ENCODE measurements at regions of chr9 and their contacts with region 1.

Region 1: DNA sequence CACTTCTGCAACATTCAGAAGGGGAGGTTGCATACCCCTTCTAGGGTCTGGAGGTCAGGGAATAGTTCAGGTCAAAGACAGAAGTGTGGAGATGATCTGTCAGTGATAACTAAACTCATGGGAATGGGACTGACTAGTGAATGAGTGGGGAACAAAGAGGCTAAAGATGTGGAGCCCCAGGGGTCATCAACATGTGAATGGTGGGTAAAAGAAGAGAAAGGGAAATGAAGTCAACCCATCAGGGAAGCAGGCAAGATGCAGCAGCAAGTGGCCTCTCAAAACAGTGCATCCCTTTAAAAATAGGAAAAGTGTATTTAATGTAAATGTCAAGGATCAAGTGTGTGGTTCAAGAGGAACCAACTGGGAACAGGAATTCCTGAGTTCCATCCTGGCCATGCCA is 69.9 kb downstream of the PLPPR1 start:
- DNase-seq: no peak
- H3K4me3 ChIP-seq: no peak overlapping the region
- H3K27ac ChIP-seq: no peak overlapping the region
- H3K4me1 ChIP-seq: no peaks in the 10 kb centered on the region
- H3K27me3 ChIP-seq: no peaks in the 10 kb centered on the region
- CTCF ChIP-seq: no peak

Region 2: DNA sequence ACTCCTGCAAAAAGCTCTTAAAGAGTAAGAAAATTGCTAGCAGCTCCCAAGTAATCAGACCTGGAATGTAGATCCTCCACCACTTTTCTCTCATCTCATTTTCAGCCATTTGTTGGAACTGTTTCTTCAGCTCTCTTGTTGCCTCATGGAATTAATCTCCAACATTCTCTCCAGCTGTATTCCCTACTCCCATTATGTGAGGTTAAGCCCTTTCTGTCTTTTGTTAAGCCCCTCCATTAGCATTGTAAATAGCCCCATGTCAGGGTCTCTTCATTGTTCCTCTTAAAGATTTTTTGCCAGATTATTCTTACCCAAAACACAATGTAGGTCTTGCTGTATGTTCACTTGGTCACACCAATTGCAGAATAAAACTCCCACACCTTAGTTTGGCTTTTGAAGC is 50.0 kb after region 1 on chr9:
- intact Hi-C with region 1: loop called (anchors 5 kb)
- DNase-seq: no peak
- H3K4me3 ChIP-seq: no peak overlapping the region
- H3K27ac ChIP-seq: no peak overlapping the region
- H3K4me1 ChIP-seq: no peaks in the 10 kb centered on the region
- H3K27me3 ChIP-seq: no peaks in the 10 kb centered on the region
- CTCF ChIP-seq: no peak